CD4-positive, alpha-beta T cell (primary cell): ENCODE measurements at regions of chr5 and their contacts with region 1.

Region 1: GRCh38 chr5:11494340-11494739 is 409.9 kb downstream of the CTNND2 start:
- DNase-seq: no peak
- ATAC-seq: no peak
- H3K4me3 ChIP-seq: no peak overlapping the region
- H3K4me3 Mint-ChIP-seq: no peak overlapping the region
- H3K27ac ChIP-seq: no peak overlapping the region
- H3K27ac Mint-ChIP-seq: no peak overlapping the region
- H3K4me1 ChIP-seq: no peaks in the 10 kb centered on the region
- H3K4me1 Mint-ChIP-seq: no peaks in the 10 kb centered on the region
- H3K27me3 ChIP-seq: no peaks in the 10 kb centered on the region
- H3K27me3 Mint-ChIP-seq: no peaks in the 10 kb centered on the region
- CTCF ChIP-seq: no peak

Region 2: GRCh38 chr5:10987930-10988504 is 506.3 kb before region 1 on chr5:
- CTCF ChIA-PET with region 1: no interaction called
- POLR2A ChIA-PET with region 1: no interaction called
- intact Hi-C with region 1: loop called in 1 of 2 experiments (anchors 10 kb)
- DNase-seq: peak; percentile 30 to 69 (median 57)
- ATAC-seq: peak; percentile 65
- H3K4me3 ChIP-seq: no peak overlapping the region
- H3K4me3 Mint-ChIP-seq: peak overlapping the region; percentile 1
- H3K27ac ChIP-seq: no peak overlapping the region
- H3K27ac Mint-ChIP-seq: no peak overlapping the region
- H3K4me1 ChIP-seq: peaks cover 7% of the 10 kb centered on the region
- H3K4me1 Mint-ChIP-seq: peaks cover 10% of the 10 kb centered on the region
- H3K27me3 ChIP-seq: peaks cover 6 to 9% of the 10 kb centered on the region in 2 experiments
- H3K27me3 Mint-ChIP-seq: peaks cover 37% of the 10 kb centered on the region
- CTCF ChIP-seq: peak; percentile 58